Activated CD4-positive, alpha-beta T cell treated with anti-CD3 and anti-CD28 coated beads, Interleukin-2, amount 10 ng/mL, durations not matched to agents 24 days and 14 days (primary cell): ENCODE measurements at regions of chr2 and their contacts with region 1.

Region 1: GRCh38 chr2:216222650-216223352 is 113.7 kb downstream of the XRCC5 start:
- DNase-seq: peak; percentile 72
- H3K4me3 Mint-ChIP-seq: peak overlapping the region; percentile 24
- H3K27ac Mint-ChIP-seq: peak overlapping the region; percentile 69
- H3K4me1 Mint-ChIP-seq: peaks cover 39% of the 10 kb centered on the region
- H3K27me3 Mint-ChIP-seq: no peaks in the 10 kb centered on the region

Region 2: GRCh38 chr2:216034065-216034464 is 188.7 kb before region 1 on chr2:
- intact Hi-C with region 1: loop called (anchors 5 kb)
- DNase-seq: peak; percentile 94
- H3K4me3 Mint-ChIP-seq: no peak overlapping the region
- H3K27ac Mint-ChIP-seq: no peak overlapping the region
- H3K4me1 Mint-ChIP-seq: peaks cover 36% of the 10 kb centered on the region
- H3K27me3 Mint-ChIP-seq: no peaks in the 10 kb centered on the region

Region 3: DNA sequence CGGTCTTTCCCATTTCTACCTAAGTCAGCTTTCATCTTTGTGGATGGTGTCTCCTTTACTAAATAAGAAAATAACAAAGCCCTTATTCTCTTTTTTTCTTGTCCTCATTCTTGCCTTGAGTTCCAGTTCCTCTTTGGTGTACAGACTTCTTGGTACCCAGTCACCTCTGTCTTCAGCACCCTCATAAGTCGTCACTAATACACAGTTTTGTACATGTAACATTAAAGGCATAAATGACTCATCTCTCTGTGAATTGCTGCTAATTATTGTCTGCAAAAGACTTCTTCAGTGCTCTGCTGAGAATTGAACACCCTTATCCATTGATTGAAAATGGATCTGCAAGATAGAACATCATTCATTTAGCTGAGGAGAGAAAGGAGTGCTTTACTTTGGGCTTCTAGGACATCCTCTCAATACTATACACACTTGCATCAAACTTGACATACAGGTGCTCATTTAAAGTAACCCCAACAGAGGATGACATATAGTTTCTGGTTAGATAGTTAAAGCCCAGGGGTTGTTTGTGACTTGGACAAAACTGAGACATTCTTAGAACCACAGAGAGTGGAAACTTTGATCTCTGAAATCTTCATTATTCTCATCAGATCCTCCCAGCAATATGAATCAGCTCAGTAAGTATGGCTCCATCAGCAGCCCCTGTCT is 16.6 kb before region 1 on chr2:
- intact Hi-C with region 1: loop called (anchors 1 kb)
- DNase-seq: peak; percentile 50
- H3K4me3 Mint-ChIP-seq: peak overlapping the region; percentile 32
- H3K27ac Mint-ChIP-seq: peak overlapping the region; percentile 89
- H3K4me1 Mint-ChIP-seq: peaks cover 44% of the 10 kb centered on the region
- H3K27me3 Mint-ChIP-seq: no peaks in the 10 kb centered on the region

Region 4: GRCh38 chr2:216348756-216349308 is 126.0 kb after region 1 on chr2:
- intact Hi-C with region 1: loop called (anchors 2 kb)
- DNase-seq: no peak
- H3K4me3 Mint-ChIP-seq: no peak overlapping the region
- H3K27ac Mint-ChIP-seq: peak overlapping the region; percentile 78
- H3K4me1 Mint-ChIP-seq: peaks cover 62% of the 10 kb centered on the region
- H3K27me3 Mint-ChIP-seq: peaks cover 4% of the 10 kb centered on the region

Region 5: DNA sequence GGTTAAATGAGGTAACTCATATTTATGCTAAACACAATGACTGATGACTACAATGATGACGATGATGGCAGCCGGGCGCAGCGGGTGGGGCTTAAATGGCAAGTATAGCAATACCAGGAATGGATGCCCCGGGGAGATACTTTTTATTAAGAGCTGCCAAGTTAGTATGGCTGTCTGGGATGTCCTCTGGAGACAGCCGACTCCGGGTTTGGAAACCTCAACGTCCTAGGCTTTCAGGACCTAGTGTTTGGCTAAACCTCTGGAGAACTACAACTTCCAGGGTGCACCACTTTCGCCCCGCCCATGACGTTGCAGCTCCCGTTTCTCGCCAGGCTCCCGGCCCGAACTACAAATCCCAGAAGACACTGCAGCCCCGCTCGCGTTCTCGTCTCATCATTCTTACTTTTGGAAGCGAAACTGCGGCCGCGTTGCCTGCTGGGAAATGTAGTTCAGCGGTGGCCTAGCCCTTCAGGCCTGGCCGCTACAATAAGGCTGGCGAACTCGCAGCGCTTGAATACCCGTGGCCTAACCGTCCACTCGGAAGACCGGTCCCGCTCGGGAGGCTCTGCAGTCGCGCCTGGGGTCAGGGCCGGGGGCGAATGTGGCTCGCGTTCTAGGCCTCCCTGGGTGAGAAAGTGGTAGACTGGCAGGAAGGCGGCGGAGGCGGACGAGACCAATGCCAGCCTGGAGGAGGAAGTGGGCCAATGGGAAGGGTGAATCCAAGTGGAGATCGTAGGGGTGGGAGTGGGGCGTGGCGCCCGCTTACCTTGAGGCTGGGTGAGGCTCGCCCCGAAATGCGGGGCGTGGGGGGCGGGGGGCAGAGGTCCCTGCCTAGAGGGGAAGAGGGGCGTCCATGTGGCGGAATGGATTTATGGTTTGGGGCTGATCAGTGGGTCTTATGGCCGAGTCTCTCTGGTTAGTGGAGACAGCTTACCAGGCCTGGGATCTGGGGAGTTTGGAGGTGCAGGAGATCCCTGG is 189.5 kb after region 1 on chr2 and contains the start of gene SMARCAL1:
- intact Hi-C with region 1: loop called (anchors 2 kb)
- DNase-seq: peak; percentile 99
- H3K4me3 Mint-ChIP-seq: peak within 1 kb of the TSS; percentile 100
- H3K27ac Mint-ChIP-seq: peak within 1 kb of the TSS; percentile 96
- H3K4me1 Mint-ChIP-seq: peaks cover 16% of the 10 kb centered on the region
- H3K27me3 Mint-ChIP-seq: peaks cover 11% of the 10 kb centered on the region
- total RNA-seq, gene SMARCAL1: 27.4 and 29.0 TPM in 2 replicates

Region 6: DNA sequence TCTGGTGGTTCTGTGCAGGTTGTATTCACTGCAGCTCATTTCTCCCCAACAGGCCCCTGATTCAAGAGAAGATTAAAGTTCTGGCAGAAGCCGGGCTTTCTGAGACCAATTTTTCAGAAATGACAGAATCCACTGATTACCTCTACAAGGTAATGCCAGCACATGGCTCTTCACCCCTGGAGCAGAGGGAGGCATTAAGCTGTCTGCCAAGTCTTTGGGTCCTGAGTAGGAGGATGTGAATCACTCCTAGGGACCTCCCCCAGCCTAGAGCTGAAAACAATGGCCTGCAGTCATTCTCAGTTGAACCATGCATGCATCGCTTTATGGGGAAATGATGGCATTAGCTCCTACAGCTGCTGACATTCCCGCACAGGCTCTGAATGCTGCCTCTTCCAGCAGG is 255.3 kb after region 1 on chr2:
- intact Hi-C with region 1: loop called (anchors 5 kb)
- DNase-seq: no peak
- H3K4me3 Mint-ChIP-seq: no peak overlapping the region
- H3K27ac Mint-ChIP-seq: no peak overlapping the region
- H3K4me1 Mint-ChIP-seq: peaks cover 19% of the 10 kb centered on the region
- H3K27me3 Mint-ChIP-seq: no peaks in the 10 kb centered on the region